HEK293 (cell line): ENCODE measurements at regions of chr6 and their contacts with region 1.

Region 1: DNA sequence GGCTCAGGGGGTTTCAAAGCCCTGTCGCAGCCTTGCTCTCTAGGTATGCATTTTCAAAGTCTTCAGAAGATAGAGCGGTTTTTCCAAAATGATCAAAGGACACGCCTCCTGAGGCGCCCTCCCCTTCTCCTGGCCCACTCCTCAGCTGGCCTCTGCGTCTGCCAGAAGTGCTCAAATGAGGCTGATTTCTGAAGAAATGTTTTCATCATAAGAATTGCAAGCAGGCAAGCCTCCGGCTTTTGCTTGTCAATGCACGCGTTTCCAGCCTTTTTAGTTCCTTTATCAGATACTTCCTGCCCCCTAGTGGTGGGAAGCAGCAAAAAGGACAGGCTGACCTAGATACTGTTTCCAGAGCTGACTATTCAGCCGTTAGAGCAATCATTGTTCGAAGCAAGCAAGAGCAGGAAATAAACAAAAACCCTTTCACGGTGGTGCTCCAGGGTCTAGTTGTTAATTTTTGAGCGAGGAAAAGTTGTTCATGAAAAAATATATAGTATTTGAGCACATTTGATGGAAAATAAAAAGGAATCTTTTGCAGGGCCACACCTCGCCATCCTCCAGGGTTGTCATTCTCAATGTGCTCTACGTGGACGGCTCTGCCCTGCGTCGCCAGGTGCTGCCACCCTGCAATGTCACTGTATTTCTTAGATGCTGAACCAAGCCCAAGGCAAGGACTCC is 93.4 kb upstream of the ASF1A start:
- H3K4me3 ChIP-seq: no peak overlapping the region; the same call in 1 of the 2 replicates
- H3K27ac ChIP-seq: no peak overlapping the region
- H3K4me1 ChIP-seq: no peaks in the 10 kb centered on the region
- CTCF ChIP-seq: peak; percentile 74

Region 2: GRCh38 chr6:118565311-118565960 is 235.1 kb before region 1 on chr6:
- CTCF ChIA-PET with region 1: interaction called, 13 read pairs
- POLR2A ChIA-PET with region 1: no interaction called
- H3K4me3 ChIP-seq: no peak overlapping the region
- H3K27ac ChIP-seq: no peak overlapping the region
- H3K4me1 ChIP-seq: no peaks in the 10 kb centered on the region
- CTCF ChIP-seq: peak; percentile 63

Region 3: GRCh38 chr6:118787724-118788423 is 12.7 kb before region 1 on chr6:
- CTCF ChIA-PET with region 1: interaction called, 47 read pairs
- POLR2A ChIA-PET with region 1: no interaction called
- H3K4me3 ChIP-seq: no peak overlapping the region
- H3K27ac ChIP-seq: no peak overlapping the region
- H3K4me1 ChIP-seq: peaks cover 8% of the 10 kb centered on the region
- CTCF ChIP-seq: no peak